ENCODE measurements at regions of chr16 and their contacts with region 1.

Region 1: GRCh38 chr16:11534262-11534661 is 52.5 kb downstream of the LITAF start:
- DNase-seq: no peak

Region 2: DNA sequence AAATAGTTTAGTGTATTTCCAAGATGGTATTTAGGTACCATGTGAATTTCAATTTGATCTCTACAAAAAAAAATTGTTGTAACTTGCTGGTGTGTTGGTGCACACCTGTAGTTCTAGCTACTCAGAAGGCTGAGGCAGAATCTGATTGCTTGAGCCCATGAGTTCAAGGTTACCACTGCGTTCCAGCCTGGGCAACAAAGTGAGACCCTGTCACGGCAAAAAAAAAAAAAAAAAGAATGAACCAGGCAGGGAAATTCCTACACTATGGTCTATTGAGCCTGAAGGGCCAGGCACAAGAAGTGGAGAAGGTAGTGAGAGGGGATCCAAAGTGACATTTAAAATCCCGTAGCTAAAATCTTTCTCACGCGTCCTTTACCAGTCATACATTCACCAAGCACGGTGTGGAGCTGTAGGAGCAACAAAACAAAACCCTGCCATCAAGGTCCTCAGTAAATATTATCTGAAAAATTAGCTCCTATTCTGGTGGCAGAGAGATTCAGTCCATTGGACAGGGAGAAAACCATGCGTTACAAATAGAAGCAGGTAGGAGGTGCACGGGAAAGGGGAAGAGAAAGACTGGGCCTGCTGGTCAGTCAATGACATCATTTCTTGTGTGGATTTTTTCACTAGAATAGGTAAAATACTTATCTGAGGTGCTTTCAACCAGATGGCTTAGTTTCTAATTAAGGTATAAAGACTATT is 181.1 kb after region 1 on chr16:
- intact Hi-C with region 1: loop called (anchors 2 kb)
- DNase-seq: no peak

Measured in cardiac septum (tissue), 1 donor.